ENCODE measurements at regions of chr12 and their contacts with region 1.

Region 1: DNA sequence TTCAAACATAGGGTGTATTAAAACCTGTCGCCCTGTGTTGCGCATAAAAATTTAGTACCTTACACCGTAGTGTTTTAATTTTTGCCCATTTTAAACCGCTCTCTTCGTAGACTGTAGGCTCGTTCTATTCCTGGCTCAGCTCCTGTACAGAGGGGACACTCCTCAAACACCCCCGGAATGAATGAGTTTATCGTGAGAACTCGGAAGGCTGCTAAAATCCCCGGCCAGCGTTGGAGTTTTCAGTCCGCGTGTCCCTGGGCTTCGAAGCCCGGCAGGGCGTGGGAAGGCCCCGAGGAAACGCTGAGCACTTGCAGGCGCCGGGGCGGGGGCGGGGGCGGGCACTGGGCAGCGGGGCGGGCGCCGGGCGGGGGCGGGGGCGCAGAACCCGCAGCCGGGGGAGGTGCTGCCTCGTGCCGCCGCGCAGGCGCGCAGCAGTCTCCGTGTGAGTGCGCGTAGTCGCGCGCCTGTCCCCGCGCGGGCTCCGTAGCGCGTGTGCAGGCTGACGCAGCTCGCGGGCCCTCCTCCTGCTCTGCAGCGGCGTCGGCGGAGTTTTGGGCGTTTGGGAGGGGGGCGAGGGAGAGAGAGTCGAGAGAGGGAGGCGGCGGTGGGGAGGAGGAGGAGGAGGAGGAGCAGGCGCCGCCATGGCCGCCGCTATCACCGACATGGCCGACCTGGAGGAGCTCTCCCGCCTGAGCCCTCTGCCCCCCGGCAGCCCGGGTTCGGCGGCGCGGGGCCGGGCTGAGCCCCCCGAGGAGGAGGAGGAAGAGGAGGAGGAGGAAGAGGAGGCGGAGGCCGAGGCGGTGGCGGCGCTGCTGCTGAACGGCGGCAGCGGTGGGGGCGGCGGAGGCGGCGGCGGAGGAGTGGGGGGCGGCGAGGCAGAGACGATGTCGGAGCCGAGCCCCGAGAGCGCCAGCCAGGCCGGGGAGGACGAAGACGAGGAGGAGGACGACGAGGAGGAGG is at the start of gene AEBP2:
- DNase-seq: peak; percentile 90 to 99 (median 93)
- ATAC-seq: peak; percentile 88
- H3K4me3 ChIP-seq: peak within 1 kb of the TSS; percentile 69 to 84
- H3K4me3 Mint-ChIP-seq: peak within 1 kb of the TSS; percentile 99
- H3K27ac ChIP-seq: peak within 1 kb of the TSS; percentile 80 to 90
- H3K27ac Mint-ChIP-seq: peak within 1 kb of the TSS; percentile 99
- H3K4me1 ChIP-seq: peaks cover 33% of the 10 kb centered on the region
- H3K4me1 Mint-ChIP-seq: peaks cover 45% of the 10 kb centered on the region
- H3K27me3 ChIP-seq: no peaks in the 10 kb centered on the region
- H3K27me3 Mint-ChIP-seq: no peaks in the 10 kb centered on the region
- CTCF ChIP-seq: no peak
- total RNA-seq, gene AEBP2: 54.0 to 57.9 TPM

Region 2: GRCh38 chr12:19129486-19130223 is 309.7 kb before region 1 on chr12 and contains the start of gene PLEKHA5:
- CTCF ChIA-PET with region 1: no interaction called
- POLR2A ChIA-PET with region 1: no interaction called
- intact Hi-C with region 1: loop called in 1 of 2 experiments (anchors 2 kb)
- DNase-seq: peak in 6 of 9 experiments; percentile 13 to 72 (median 48)
- ATAC-seq: peak; percentile 60
- H3K4me3 ChIP-seq: peak within 1 kb of the TSS; percentile 61 to 69
- H3K4me3 Mint-ChIP-seq: peak within 1 kb of the TSS; percentile 86
- H3K27ac ChIP-seq: peak within 1 kb of the TSS in 1 of 2 experiments; percentile 53
- H3K27ac Mint-ChIP-seq: peak within 1 kb of the TSS; percentile 63
- H3K4me1 ChIP-seq: peaks cover 6% of the 10 kb centered on the region
- H3K4me1 Mint-ChIP-seq: peaks cover 11% of the 10 kb centered on the region
- H3K27me3 ChIP-seq: no peaks in the 10 kb centered on the region
- H3K27me3 Mint-ChIP-seq: peaks cover 7% of the 10 kb centered on the region
- CTCF ChIP-seq: no peak
- total RNA-seq, gene PLEKHA5: 2.7 to 3.2 TPM

Region 3: DNA sequence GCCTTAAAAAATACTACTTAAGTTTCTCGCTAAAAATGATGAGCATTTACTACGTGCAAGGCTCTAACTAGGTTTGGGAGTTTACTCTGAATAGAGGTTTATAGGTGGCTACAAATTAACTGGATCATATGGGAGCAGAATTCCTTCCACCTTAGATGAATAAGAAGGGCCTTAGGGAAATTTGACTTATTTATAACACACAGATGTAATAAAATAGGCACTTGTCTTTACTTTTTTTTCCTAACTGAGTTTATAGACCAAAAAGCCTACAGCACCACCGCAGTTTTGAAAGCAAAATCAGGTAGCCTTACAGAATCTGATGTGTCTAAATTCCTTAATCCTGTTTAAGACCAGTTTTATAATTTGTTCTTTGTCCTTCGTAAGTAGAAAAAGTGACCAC is 10.5 kb after region 1 on chr12:
- CTCF ChIA-PET with region 1: no interaction called
- POLR2A ChIA-PET with region 1: interaction called, 3 read pairs
- intact Hi-C with region 1: loop called in 1 of 2 experiments (anchors 1 kb)
- DNase-seq: no peak
- ATAC-seq: no peak
- H3K4me3 ChIP-seq: no peak overlapping the region
- H3K4me3 Mint-ChIP-seq: no peak overlapping the region
- H3K27ac ChIP-seq: no peak overlapping the region
- H3K27ac Mint-ChIP-seq: peak overlapping the region; percentile 16
- H3K4me1 ChIP-seq: peaks cover 53% of the 10 kb centered on the region
- H3K4me1 Mint-ChIP-seq: peaks cover 86% of the 10 kb centered on the region
- H3K27me3 ChIP-seq: no peaks in the 10 kb centered on the region
- H3K27me3 Mint-ChIP-seq: no peaks in the 10 kb centered on the region
- CTCF ChIP-seq: no peak

Region 4: DNA sequence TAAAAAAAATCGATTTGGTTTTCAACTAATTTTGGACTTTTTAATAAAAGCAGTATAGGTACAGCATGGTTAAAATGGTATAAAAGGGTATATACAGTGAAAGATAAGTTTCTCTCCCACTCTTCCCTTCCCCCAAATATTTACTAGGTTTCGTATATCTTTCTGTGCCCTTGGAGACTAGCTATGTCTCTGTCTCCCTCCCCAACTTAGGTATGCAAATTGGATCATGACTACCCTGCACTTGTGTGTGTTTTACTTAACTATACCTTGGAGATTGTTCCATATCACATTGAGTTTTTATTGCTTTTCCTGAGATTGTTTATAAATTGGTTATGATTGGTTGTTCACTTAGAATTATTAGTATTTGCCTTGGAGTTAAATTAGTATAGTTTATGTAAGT is 19.4 kb after region 1 on chr12:
- CTCF ChIA-PET with region 1: no interaction called
- POLR2A ChIA-PET with region 1: no interaction called
- intact Hi-C with region 1: loop called in 1 of 2 experiments (anchors 2 kb)
- DNase-seq: no peak
- ATAC-seq: no peak
- H3K4me3 ChIP-seq: no peak overlapping the region
- H3K4me3 Mint-ChIP-seq: no peak overlapping the region
- H3K27ac ChIP-seq: no peak overlapping the region
- H3K27ac Mint-ChIP-seq: no peak overlapping the region
- H3K4me1 ChIP-seq: peaks cover 34% of the 10 kb centered on the region
- H3K4me1 Mint-ChIP-seq: peaks cover 77% of the 10 kb centered on the region
- H3K27me3 ChIP-seq: no peaks in the 10 kb centered on the region
- H3K27me3 Mint-ChIP-seq: no peaks in the 10 kb centered on the region
- CTCF ChIP-seq: no peak

Region 5: GRCh38 chr12:19482551-19483109 is 43.3 kb after region 1 on chr12:
- CTCF ChIA-PET with region 1: no interaction called
- POLR2A ChIA-PET with region 1: interaction called, 3 read pairs
- intact Hi-C with region 1: loop called (anchors 5 kb)
- DNase-seq: peak; percentile 3 to 63 (median 34)
- ATAC-seq: peak; percentile 81
- H3K4me3 ChIP-seq: no peak overlapping the region
- H3K4me3 Mint-ChIP-seq: peak overlapping the region; percentile 61
- H3K27ac ChIP-seq: peak overlapping the region; percentile 17 to 67
- H3K27ac Mint-ChIP-seq: peak overlapping the region; percentile 85
- H3K4me1 ChIP-seq: peaks cover 36% of the 10 kb centered on the region
- H3K4me1 Mint-ChIP-seq: peaks cover 55% of the 10 kb centered on the region
- H3K27me3 ChIP-seq: no peaks in the 10 kb centered on the region
- H3K27me3 Mint-ChIP-seq: no peaks in the 10 kb centered on the region
- CTCF ChIP-seq: no peak

Region 6: GRCh38 chr12:19597167-19598026 is 158.1 kb after region 1 on chr12:
- CTCF ChIA-PET with region 1: no interaction called
- POLR2A ChIA-PET with region 1: no interaction called
- intact Hi-C with region 1: no loop called
- DNase-seq: no peak
- ATAC-seq: no peak
- H3K4me3 ChIP-seq: no peak overlapping the region
- H3K4me3 Mint-ChIP-seq: no peak overlapping the region
- H3K27ac ChIP-seq: no peak overlapping the region
- H3K27ac Mint-ChIP-seq: no peak overlapping the region
- H3K4me1 ChIP-seq: no peaks in the 10 kb centered on the region
- H3K4me1 Mint-ChIP-seq: no peaks in the 10 kb centered on the region
- H3K27me3 ChIP-seq: no peaks in the 10 kb centered on the region
- H3K27me3 Mint-ChIP-seq: no peaks in the 10 kb centered on the region
- CTCF ChIP-seq: no peak

Region 7: GRCh38 chr12:19683178-19683927 is 244.0 kb after region 1 on chr12:
- CTCF ChIA-PET with region 1: no interaction called
- POLR2A ChIA-PET with region 1: no interaction called
- intact Hi-C with region 1: loop called in 1 of 2 experiments (anchors 1 kb)
- DNase-seq: no peak
- ATAC-seq: no peak
- H3K4me3 ChIP-seq: no peak overlapping the region
- H3K4me3 Mint-ChIP-seq: no peak overlapping the region
- H3K27ac ChIP-seq: no peak overlapping the region
- H3K27ac Mint-ChIP-seq: no peak overlapping the region
- H3K4me1 ChIP-seq: peaks cover 10% of the 10 kb centered on the region
- H3K4me1 Mint-ChIP-seq: peaks cover 35% of the 10 kb centered on the region
- H3K27me3 ChIP-seq: no peaks in the 10 kb centered on the region
- H3K27me3 Mint-ChIP-seq: no peaks in the 10 kb centered on the region
- CTCF ChIP-seq: no peak

Region 8: DNA sequence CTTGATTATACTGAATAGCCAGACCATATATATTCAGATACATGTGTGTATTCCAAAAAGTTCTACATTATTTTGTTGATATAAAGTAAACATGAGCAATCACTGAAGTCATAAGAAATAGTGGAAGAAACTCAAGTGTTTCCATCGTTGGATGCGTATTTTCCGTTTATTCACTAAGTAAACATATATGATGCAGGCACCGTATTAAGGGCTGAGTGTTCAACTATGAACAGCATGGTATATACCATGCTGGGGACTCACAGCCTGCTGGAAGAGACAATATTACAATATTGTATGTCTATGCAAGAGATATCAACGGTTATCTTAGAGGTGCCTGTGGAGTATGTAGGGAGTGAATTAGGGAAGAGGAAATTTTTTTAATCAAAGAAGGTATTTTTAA is 1999.3 kb after region 1 on chr12:
- CTCF ChIA-PET with region 1: no interaction called
- POLR2A ChIA-PET with region 1: no interaction called
- intact Hi-C with region 1: loop called in 1 of 2 experiments (anchors 10 kb)
- DNase-seq: peak in 1 of 9 experiments; percentile 27
- ATAC-seq: no peak
- H3K4me3 ChIP-seq: peak overlapping the region; percentile 91 to 95
- H3K4me3 Mint-ChIP-seq: peak overlapping the region; percentile 98
- H3K27ac ChIP-seq: peak overlapping the region; percentile 86 to 89
- H3K27ac Mint-ChIP-seq: peak overlapping the region; percentile 97
- H3K4me1 ChIP-seq: peaks cover 37% of the 10 kb centered on the region
- H3K4me1 Mint-ChIP-seq: peaks cover 46% of the 10 kb centered on the region
- H3K27me3 ChIP-seq: no peaks in the 10 kb centered on the region
- H3K27me3 Mint-ChIP-seq: no peaks in the 10 kb centered on the region
- CTCF ChIP-seq: no peak

Measured in CD8-positive, alpha-beta T cell (primary cell).